ENCODE measurements at regions of chr19 and their contacts with region 1.

Region 1: DNA sequence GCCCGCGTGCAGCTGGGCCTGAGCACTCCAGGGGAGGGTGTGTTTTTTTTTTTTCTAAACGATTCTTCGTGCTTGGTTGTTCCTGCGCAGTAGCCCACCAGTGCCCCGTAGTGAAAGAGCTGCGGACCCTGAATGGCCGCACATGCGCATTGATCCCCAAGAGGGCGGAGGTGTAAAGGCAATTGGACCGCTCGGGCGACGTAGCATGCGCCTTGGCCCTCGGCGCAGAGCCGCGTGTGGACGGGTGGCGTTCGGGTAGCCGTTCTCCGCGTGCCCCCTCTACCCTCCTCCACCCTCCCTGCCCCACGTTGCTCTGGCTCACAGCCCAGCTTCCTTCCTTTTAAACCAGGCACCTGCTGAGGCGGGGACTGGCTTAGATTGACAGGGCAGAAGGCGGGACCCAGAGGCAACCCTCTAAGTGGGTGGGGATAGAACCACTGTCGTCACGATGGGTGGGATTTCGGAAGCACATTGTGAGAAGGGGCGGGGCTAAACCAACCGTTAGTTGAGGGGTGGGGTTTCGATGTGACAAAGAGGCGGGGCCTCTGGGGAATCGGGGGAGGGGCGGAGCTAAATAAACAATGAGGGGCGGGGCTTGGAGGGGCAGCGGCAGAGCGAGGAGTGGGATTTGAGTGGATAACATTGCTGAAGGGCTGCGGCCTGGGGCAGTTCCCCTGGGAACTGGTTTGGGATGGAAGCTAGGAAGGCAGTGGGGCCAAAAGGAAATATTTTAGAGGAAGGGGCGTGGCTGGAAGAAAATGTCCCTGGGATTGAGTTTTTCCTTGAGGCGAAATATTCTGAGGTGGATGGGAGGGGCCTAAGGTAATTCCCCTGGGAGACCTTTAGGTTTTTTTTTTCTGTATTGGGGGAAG is 543 bp upstream of the NUP62 start:
- DNase-seq: peak; percentile 97
- CTCF ChIP-seq: no peak

Region 2: GRCh38 chr19:49877020-49877878 is 52.6 kb before region 1 on chr19 and contains the starts of genes AKT1S1 and TBC1D17:
- CTCF ChIA-PET with region 1: no interaction called
- POLR2A ChIA-PET with region 1: interaction called, 11 read pairs
- DNase-seq: peak; percentile 95
- CTCF ChIP-seq: no peak